Panc1 (cell line): ENCODE measurements at regions of chr17 and their contacts with region 1.

Region 1: GRCh38 chr17:52470554-52470953 is 312.0 kb upstream of the CA10 start:
- DNase-seq: no peak
- ATAC-seq: no peak
- H3K4me3 ChIP-seq: no peak overlapping the region
- H3K27ac ChIP-seq: no peak overlapping the region
- H3K4me1 ChIP-seq: no peaks in the 10 kb centered on the region
- H3K27me3 ChIP-seq: no peaks in the 10 kb centered on the region
- CTCF ChIP-seq: no peak

Region 2: DNA sequence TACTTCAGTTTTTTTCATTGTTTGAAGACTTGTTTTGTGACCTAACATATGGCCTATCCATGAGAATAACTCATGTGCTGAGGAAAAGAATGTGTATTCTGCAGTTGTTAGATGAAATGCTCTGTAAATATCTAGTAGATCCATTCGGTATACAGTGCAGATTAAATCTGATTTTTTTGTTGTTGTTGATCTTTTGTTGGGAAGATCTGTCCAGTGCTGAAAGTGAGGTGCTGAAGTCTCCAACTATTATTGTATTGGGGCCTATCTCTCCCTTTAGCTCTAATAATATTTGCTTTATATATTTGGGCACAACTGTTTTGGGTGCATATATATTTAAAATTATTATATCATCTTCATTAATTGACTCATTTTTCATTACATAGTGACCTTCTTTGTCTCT is 125.7 kb before region 1 on chr17:
- CTCF ChIA-PET with region 1: no interaction called
- POLR2A ChIA-PET with region 1: interaction called, 12 read pairs
- in situ Hi-C with region 1: no loop called
- intact Hi-C with region 1: no loop called
- DNase-seq: no peak
- ATAC-seq: no peak
- H3K4me3 ChIP-seq: no peak overlapping the region
- H3K27ac ChIP-seq: no peak overlapping the region
- H3K4me1 ChIP-seq: no peaks in the 10 kb centered on the region
- H3K27me3 ChIP-seq: no peaks in the 10 kb centered on the region
- CTCF ChIP-seq: no peak